H1 (cell line): ENCODE measurements at regions of chr9 and their contacts with region 1.

Region 1: DNA sequence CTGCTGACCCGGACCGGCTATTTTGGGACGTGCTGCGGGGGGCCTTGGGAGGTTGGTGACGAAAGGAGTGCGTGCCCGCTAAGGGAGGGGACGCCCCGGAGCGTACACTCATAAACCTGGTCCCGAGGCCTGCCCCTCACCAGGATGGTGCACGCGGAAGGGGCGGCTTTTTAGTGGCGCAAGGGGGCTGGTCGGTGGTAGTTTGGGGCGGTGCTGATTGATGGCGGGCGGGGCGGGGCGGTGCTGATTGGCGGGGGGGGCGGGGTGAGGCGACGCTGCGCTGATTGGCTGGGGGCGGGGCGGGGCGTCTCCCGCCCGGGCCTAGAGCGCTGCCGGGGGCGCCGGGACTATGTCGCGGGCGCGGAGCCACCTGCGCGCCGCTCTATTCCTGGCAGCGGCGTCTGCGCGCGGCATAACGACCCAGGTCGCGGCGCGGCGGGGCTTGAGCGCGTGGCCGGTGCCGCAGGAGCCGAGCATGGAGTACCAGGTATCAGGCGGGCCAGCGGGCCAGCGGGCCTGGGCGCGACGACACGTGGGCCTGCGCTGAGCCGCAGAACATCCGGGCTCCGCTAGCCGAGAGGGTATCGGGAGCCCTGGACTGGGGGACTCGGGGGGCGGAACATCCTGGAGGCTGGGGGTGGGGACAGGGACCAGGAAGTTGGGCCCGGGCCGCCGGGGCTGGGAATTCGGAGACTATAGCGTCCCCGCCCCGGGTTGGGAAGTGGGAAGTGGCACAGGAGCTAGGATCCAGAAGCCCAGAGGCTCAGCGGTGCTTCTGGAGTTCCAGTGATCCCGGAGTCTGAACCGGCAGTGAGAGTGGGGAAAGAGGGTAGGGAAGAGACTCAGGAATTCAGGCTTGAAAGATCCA is at the start of gene FPGS:
- DNase-seq: peak; percentile 65 to 88
- H3K4me3 ChIP-seq: peak within 1 kb of the TSS; percentile 61 to 86 (median 81)
- H3K27ac ChIP-seq: peak within 1 kb of the TSS; percentile 87
- H3K4me1 ChIP-seq: peaks cover 5 to 9% (median 6%) of the 10 kb centered on the region in 4 experiments; a peak in 6 of 7 replicates
- H3K27me3 ChIP-seq: no peaks in the 10 kb centered on the region
- CTCF ChIP-seq: no peak
- EP300 ChIP-seq: 0 out of 3 replicates have a peak, but pooled peaks of 1 of the 2 experiments have one; percentile 15
- POLR2A ChIP-seq: peak in 1 of 2 experiments; percentile 88; a peak in 2 of 3 replicates
- RAD21 ChIP-seq: no peak
- total RNA-seq, gene FPGS: 62.4 and 63.7 TPM in 2 replicates

Region 2: DNA sequence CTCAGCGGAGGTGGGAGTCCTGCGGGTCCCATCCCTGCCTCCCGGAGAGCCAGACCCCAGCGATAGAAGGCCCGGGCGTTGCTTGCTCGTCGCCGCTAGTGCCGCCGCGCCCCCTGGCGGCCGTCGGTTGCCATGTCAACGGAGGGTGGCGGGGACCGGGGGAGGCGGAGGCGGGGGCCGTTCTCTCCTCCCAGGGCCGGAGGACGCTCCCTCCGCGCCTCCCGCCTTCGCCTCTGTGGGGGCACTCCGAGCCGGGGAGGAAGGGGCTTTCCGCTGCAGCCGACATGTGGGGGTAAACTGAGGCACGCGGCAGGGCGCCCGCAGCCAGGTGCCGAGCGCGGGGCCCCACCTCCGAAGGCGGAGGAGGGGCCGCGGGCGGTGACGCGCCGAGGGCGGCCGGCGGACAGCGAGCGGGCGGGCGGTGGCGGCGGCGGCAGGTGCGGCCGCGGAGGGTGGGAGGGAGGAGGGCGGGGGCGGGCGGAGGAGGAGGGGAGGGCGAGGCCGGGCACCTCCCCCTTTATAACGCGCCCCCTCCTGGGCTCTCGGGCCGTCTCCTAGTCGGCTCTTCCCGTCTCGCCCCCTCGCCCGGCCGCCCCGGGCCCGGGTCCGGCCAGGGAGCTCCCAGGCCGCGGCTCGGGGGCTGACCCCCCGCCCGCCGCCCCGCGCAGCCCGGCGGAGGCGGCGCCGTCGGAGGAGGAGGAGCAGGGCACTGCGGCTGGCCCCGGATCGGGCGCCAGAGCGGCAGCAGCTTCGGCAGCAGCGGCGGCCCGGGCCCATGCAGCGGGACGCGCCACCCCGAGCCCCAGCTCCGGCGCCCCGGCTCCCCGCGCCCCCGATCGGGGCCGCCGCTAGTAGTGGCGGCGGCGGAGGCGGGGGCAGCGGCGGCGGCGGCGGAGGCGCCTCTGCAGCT is 17.5 kb before region 1 on chr9:
- CTCF ChIA-PET with region 1: interaction called, 16 read pairs
- POLR2A ChIA-PET with region 1: interaction called, 140 read pairs
- DNase-seq: peak in 1 of 2 experiments; percentile 95
- H3K4me3 ChIP-seq: peak overlapping the region; percentile 43 to 100 (median 57)
- H3K27ac ChIP-seq: peak overlapping the region; percentile 62; the same call in 1 of the 2 replicates
- H3K4me1 ChIP-seq: peaks cover 0 to 6% (median 3%) of the 10 kb centered on the region in 4 experiments; a peak in 4 of 7 replicates
- H3K27me3 ChIP-seq: no peaks in the 10 kb centered on the region
- CTCF ChIP-seq: peak in 2 of 3 experiments; percentile 65 to 91; a peak in 3 of 4 replicates
- EP300 ChIP-seq: 0 out of 3 replicates have a peak, but pooled peaks of 1 of the 2 experiments have one; percentile 40
- POLR2A ChIP-seq: no peak
- RAD21 ChIP-seq: peak; percentile 77 to 84

Region 3: DNA sequence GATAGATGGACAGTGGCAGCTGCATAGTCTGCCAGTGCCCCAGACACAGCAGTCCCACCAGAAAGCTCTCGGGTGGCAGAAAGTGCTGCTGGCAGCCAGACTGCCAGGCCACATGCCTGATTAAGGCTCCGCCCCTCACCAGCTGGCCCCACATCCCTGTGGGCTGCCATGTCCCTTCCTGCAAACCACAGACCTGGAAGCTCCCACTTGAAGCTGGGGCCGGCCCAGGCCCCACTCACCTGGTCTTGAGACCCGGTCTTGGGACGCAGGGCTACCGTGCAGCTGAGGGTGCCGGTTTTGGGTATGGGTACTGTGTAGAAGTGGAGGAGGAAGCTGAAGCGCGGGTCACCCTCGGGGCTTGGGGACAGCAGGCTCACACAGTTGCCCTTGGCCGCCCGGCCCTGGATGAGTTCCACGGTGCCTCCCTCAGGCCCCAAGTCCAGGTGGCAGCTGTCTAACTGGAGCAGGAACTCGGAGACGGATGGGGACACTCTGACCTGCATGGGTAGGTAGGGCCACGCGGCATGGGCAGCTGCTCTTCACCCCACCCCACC is 15.1 kb after region 1 on chr9:
- CTCF ChIA-PET with region 1: interaction called, 19 read pairs
- POLR2A ChIA-PET with region 1: interaction called, 14 read pairs
- DNase-seq: no peak
- H3K4me3 ChIP-seq: no peak overlapping the region
- H3K27ac ChIP-seq: no peak overlapping the region
- H3K4me1 ChIP-seq: no peaks in the 10 kb centered on the region
- H3K27me3 ChIP-seq: no peaks in the 10 kb centered on the region
- CTCF ChIP-seq: no peak
- EP300 ChIP-seq: no peak
- POLR2A ChIP-seq: no peak
- RAD21 ChIP-seq: no peak

Region 4: GRCh38 chr9:127838375-127839078 is 35.7 kb after region 1 on chr9:
- CTCF ChIA-PET with region 1: interaction called, 11 read pairs
- POLR2A ChIA-PET with region 1: interaction called, 3 read pairs
- DNase-seq: no peak
- H3K4me3 ChIP-seq: no peak overlapping the region
- H3K27ac ChIP-seq: no peak overlapping the region
- H3K4me1 ChIP-seq: peaks cover 0 to 4% (median 0%) of the 10 kb centered on the region in 4 experiments; a peak in 2 of 7 replicates
- H3K27me3 ChIP-seq: no peaks in the 10 kb centered on the region; a peak in 1 of 7 replicates
- CTCF ChIP-seq: no peak
- EP300 ChIP-seq: no peak
- POLR2A ChIP-seq: no peak
- RAD21 ChIP-seq: no peak

Region 5: GRCh38 chr9:127899128-127899946 is 96.5 kb after region 1 on chr9 and contains the start of gene ST6GALNAC6:
- CTCF ChIA-PET with region 1: no interaction called
- POLR2A ChIA-PET with region 1: no interaction called
- DNase-seq: peak in 1 of 2 experiments; percentile 82
- H3K4me3 ChIP-seq: peak within 1 kb of the TSS; percentile 78 to 99 (median 88)
- H3K27ac ChIP-seq: no peak within 1 kb of the TSS
- H3K4me1 ChIP-seq: peaks cover 3 to 40% (median 25%) of the 10 kb centered on the region in 4 experiments
- H3K27me3 ChIP-seq: no peaks in the 10 kb centered on the region
- CTCF ChIP-seq: no peak
- EP300 ChIP-seq: no peak
- POLR2A ChIP-seq: peak in 1 of 2 experiments; percentile 44; a peak in 1 of 3 replicates
- RAD21 ChIP-seq: no peak
- total RNA-seq, gene ST6GALNAC6: 37.7 and 43.7 TPM in 2 replicates